Ascending aorta (tissue), 2 donors: ENCODE measurements at regions of chr5 and their contacts with region 1.

Region 1: GRCh38 chr5:83219495-83219894 is 142.1 kb downstream of the XRCC4 start:
- DNase-seq: no peak
- H3K4me3 ChIP-seq: no peak overlapping the region
- H3K27ac ChIP-seq: no peak overlapping the region
- H3K4me1 ChIP-seq: no peaks in the 10 kb centered on the region
- H3K27me3 ChIP-seq: no peaks in the 10 kb centered on the region
- CTCF ChIP-seq: no peak

Region 2: GRCh38 chr5:83401122-83401731 is 181.7 kb after region 1 on chr5:
- intact Hi-C with region 1: loop called (anchors 10 kb)
- DNase-seq: no peak
- H3K4me3 ChIP-seq: no peak overlapping the region
- H3K27ac ChIP-seq: no peak overlapping the region
- H3K4me1 ChIP-seq: no peaks in the 10 kb centered on the region
- H3K27me3 ChIP-seq: no peaks in the 10 kb centered on the region
- CTCF ChIP-seq: no peak